Heart left ventricle (tissue), 16 donors: ENCODE measurements at regions of chr1 and their contacts with region 1.

Region 1: DNA sequence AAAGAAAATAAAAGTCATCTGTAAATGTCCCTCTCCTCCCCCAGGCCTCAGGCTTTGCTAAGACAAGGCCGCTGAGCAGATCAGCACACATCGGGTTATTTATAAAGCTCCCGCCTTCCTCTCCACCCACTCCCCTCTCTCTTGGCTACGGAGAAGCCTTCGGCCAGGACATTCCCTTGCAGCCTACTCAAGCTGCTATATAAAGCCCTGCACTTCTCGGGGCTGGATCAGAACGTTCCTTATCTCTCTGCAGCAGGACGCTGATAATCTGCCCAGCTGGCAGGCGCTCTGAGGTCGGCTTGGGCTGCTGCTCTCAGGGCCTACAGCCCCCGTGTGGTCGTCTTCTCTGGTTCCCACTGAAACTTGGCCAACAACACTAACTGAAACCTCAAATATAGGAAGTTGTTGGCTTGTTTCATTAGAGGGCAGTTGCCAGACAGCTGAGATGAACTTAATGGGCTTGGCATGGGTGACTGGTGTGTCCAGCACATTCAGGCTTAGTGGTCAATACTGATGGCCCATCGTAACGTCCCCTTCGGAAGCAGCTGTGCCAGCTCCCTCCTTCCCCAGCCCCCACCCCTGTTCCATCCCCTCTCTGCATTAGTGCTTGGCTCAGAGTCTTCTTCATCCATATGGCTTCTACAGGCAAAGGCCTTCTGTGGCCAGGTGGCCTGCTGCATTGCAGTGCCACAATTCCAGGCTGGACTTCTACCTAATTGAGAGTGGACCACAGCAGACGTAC is 64.6 kb downstream of the IER5 start:
- DNase-seq: peak; percentile 89 to 96 (median 91)
- ATAC-seq: peak; percentile 94 to 97 (median 96)
- H3K4me3 ChIP-seq: peak overlapping the region in 2 of 12 donors; percentile 5 to 7
- H3K27ac ChIP-seq: peak overlapping the region; percentile 87 to 97 (median 94)
- H3K4me1 ChIP-seq: peaks cover 14 to 56% (median 27%) of the 10 kb centered on the region in 12 donors
- H3K27me3 ChIP-seq: no peaks in the 10 kb centered on the region
- CTCF ChIP-seq: peak in 11 of 12 donors; percentile 27 to 68 (median 45)
- POLR2A ChIP-seq: peak in 1 of 2 donors; percentile 46

Region 2: DNA sequence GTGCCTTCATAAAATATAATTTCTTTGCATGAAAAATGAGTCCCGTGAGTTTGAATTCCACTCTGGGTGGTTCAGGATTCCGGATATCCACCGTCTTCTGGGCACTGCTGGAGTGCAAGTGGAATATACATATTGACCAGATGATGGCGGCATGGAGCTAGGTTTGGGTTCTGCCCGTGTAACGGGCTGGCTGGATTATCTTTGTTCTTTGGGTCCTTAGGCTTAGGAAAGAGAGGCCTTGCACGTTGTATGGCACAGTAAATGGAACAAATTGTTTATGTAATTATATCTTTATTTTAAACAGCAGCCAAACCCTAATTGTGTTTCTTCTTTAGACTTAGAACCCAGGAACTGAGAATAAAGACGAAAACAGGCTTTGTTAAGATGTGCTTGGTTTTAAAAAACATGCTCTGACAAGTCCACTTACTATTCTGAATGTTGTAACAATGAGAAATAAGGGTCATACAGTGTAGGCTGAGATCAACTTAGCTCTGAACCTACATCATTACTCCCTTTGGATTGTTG is 637.1 kb before region 1 on chr1:
- intact Hi-C with region 1: loop called in 3 of 10 experiments (anchors 5 to 10 kb)
- DNase-seq: peak in 4 of 5 donors; percentile 61 to 69 (median 66)
- ATAC-seq: peak; percentile 90 to 98 (median 96)
- H3K4me3 ChIP-seq: no peak overlapping the region
- H3K27ac ChIP-seq: peak overlapping the region in 1 of 12 donors; percentile 21
- H3K4me1 ChIP-seq: peaks cover 0 to 19% (median 10%) of the 10 kb centered on the region in 12 donors
- H3K27me3 ChIP-seq: no peaks in the 10 kb centered on the region
- CTCF ChIP-seq: peak; percentile 73 to 91 (median 88)
- POLR2A ChIP-seq: no peak

Region 3: DNA sequence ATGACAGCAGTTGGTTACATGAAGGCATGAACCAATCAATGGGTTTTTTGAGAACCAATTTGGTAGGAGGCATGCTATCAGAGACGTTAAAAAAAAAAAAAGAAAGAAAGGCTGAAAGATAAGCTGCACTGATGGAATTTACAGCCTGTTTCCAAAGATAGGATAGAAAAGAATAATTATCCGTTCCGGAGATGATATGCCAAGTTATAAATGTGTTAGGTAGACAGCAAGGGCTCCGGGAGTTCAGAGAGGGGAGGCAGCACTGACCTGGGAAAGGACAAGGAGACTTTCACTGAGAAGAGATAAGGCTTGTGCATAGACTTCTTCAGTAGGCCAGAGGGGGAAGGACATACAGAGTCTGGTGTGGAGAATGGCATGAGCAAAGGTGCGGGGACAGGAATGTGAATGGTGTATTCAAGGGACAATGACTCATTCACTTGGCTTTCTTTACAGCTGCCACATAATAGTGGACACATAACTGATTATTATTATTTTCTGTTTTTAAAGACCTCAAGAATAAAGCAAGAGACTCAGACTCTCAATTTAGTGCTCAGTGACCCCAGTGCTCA is 625.9 kb before region 1 on chr1:
- intact Hi-C with region 1: loop called in 2 of 10 experiments (anchors 5 to 10 kb)
- DNase-seq: peak in 1 of 5 donors; percentile 45
- ATAC-seq: peak in 3 of 4 donors; percentile 35 to 46 (median 41)
- H3K4me3 ChIP-seq: no peak overlapping the region
- H3K27ac ChIP-seq: no peak overlapping the region
- H3K4me1 ChIP-seq: peaks cover 0 to 39% (median 21%) of the 10 kb centered on the region in 12 donors
- H3K27me3 ChIP-seq: no peaks in the 10 kb centered on the region
- CTCF ChIP-seq: no peak
- POLR2A ChIP-seq: no peak

Region 4: DNA sequence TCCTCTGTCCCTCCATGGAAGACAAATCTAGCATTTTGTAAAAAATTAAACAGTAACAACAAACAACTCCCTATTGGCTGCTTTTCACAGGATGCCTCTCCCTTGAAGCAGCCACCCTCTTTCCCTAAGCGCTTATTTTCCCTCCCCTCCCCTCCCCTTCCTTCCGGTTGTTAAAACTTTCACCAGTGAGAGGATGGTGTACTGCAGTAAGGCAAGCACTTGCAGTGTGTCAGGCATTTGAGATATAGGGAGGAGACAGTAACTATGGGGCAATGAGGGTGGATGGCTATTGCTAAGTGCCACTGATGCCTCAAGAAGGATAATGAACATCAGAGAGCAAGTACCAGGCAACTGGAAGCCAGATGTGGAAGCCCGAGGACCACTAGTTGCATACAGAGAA is 259.4 kb before region 1 on chr1:
- intact Hi-C with region 1: loop called in 1 of 10 experiments (anchors 5 kb)
- DNase-seq: no peak
- ATAC-seq: peak in 3 of 4 donors; percentile 15 to 53 (median 34)
- H3K4me3 ChIP-seq: no peak overlapping the region
- H3K27ac ChIP-seq: no peak overlapping the region
- H3K4me1 ChIP-seq: peaks cover 0 to 21% (median 0%) of the 10 kb centered on the region in 12 donors
- H3K27me3 ChIP-seq: no peaks in the 10 kb centered on the region
- CTCF ChIP-seq: no peak
- POLR2A ChIP-seq: no peak

Region 5: GRCh38 chr1:181021811-181022434 is 131.1 kb before region 1 on chr1:
- intact Hi-C with region 1: loop called in 2 of 10 experiments (anchors 5 kb)
- DNase-seq: peak; percentile 72 to 79 (median 75)
- ATAC-seq: peak; percentile 23 to 70 (median 62)
- H3K4me3 ChIP-seq: peak overlapping the region; percentile 50 to 97 (median 76)
- H3K27ac ChIP-seq: peak overlapping the region; percentile 65 to 94 (median 86)
- H3K4me1 ChIP-seq: peaks cover 0 to 42% (median 17%) of the 10 kb centered on the region in 12 donors
- H3K27me3 ChIP-seq: peaks cover 0 to 4% (median 0%) of the 10 kb centered on the region in 9 donors
- CTCF ChIP-seq: no peak
- POLR2A ChIP-seq: no peak